CD8-positive, alpha-beta T cell (primary cell): ENCODE measurements at regions of chr18 and their contacts with region 1.

Region 1: GRCh38 chr18:34242740-34243139 is 18.0 kb upstream of the NOL4 start:
- DNase-seq: no peak
- ATAC-seq: no peak
- H3K4me3 ChIP-seq: no peak overlapping the region
- H3K4me3 Mint-ChIP-seq: no peak overlapping the region
- H3K27ac ChIP-seq: no peak overlapping the region
- H3K27ac Mint-ChIP-seq: no peak overlapping the region
- H3K4me1 ChIP-seq: no peaks in the 10 kb centered on the region
- H3K4me1 Mint-ChIP-seq: no peaks in the 10 kb centered on the region
- H3K27me3 ChIP-seq: no peaks in the 10 kb centered on the region
- H3K27me3 Mint-ChIP-seq: no peaks in the 10 kb centered on the region
- CTCF ChIP-seq: no peak

Region 2: GRCh38 chr18:34292594-34292993 is 49.9 kb after region 1 on chr18:
- CTCF ChIA-PET with region 1: no interaction called
- POLR2A ChIA-PET with region 1: no interaction called
- intact Hi-C with region 1: loop called in 1 of 2 experiments (anchors 5 kb)
- DNase-seq: no peak
- ATAC-seq: no peak
- H3K4me3 ChIP-seq: no peak overlapping the region
- H3K4me3 Mint-ChIP-seq: no peak overlapping the region
- H3K27ac ChIP-seq: no peak overlapping the region
- H3K27ac Mint-ChIP-seq: no peak overlapping the region
- H3K4me1 ChIP-seq: no peaks in the 10 kb centered on the region
- H3K4me1 Mint-ChIP-seq: no peaks in the 10 kb centered on the region
- H3K27me3 ChIP-seq: no peaks in the 10 kb centered on the region
- H3K27me3 Mint-ChIP-seq: no peaks in the 10 kb centered on the region
- CTCF ChIP-seq: no peak

Region 3: DNA sequence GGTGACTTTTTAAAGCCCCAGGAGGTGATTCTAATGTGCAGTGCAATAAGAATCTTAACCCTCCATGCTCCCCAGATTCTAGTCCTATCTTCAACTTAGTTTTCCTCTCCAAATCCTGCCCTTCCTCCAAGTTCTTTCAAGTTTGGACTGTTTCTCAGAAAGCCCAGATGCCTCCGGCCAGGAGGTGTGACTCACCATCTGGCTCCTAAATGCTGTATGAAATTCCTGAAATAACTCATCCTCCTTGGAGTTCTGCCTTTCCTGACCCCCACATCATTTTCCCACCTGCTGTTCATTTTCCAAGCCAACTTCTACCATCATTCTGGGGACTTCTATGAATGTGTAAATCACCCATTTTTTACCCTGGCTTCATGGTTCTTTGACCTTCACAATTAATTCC is 100.2 kb after region 1 on chr18:
- CTCF ChIA-PET with region 1: no interaction called
- POLR2A ChIA-PET with region 1: no interaction called
- intact Hi-C with region 1: no loop called
- DNase-seq: no peak
- ATAC-seq: no peak
- H3K4me3 ChIP-seq: no peak overlapping the region
- H3K4me3 Mint-ChIP-seq: no peak overlapping the region
- H3K27ac ChIP-seq: no peak overlapping the region
- H3K27ac Mint-ChIP-seq: no peak overlapping the region
- H3K4me1 ChIP-seq: no peaks in the 10 kb centered on the region
- H3K4me1 Mint-ChIP-seq: no peaks in the 10 kb centered on the region
- H3K27me3 ChIP-seq: no peaks in the 10 kb centered on the region
- H3K27me3 Mint-ChIP-seq: no peaks in the 10 kb centered on the region
- CTCF ChIP-seq: no peak

Region 4: DNA sequence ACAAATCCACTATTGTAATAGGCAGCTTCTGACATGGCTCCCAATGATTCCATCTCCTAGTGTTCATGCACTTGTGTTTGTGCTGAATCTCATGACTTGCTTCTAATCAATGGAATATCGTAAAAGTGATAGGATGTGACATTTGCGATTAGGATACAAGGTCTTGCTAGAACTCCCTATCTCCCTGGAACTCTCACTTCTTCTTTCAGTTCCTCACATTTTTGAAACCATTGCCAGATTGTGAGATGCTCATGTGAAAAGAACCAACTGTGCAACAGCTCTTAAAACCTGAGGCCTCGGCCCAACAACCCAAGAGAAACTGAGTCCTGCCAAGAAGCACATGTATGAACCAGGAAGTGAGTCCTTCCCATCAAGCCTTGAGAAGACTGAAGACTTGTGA is 240.5 kb after region 1 on chr18:
- CTCF ChIA-PET with region 1: no interaction called
- POLR2A ChIA-PET with region 1: no interaction called
- intact Hi-C with region 1: no loop called
- DNase-seq: no peak
- ATAC-seq: no peak
- H3K4me3 ChIP-seq: no peak overlapping the region
- H3K4me3 Mint-ChIP-seq: no peak overlapping the region
- H3K27ac ChIP-seq: no peak overlapping the region
- H3K27ac Mint-ChIP-seq: no peak overlapping the region
- H3K4me1 ChIP-seq: no peaks in the 10 kb centered on the region
- H3K4me1 Mint-ChIP-seq: no peaks in the 10 kb centered on the region
- H3K27me3 ChIP-seq: no peaks in the 10 kb centered on the region
- H3K27me3 Mint-ChIP-seq: no peaks in the 10 kb centered on the region
- CTCF ChIP-seq: no peak